ENCODE measurements at regions of chr2 and their contacts with region 1.

Region 1: GRCh38 chr2:74482801-74483674 is at the starts of genes CCDC142 and TTC31:
- DNase-seq: peak; percentile 94 to 98 (median 96)
- H3K4me3 ChIP-seq: peak within 1 kb of the TSS; percentile 57 to 100
- H3K4me3 Mint-ChIP-seq: peak within 1 kb of the TSS; percentile 99 to 100 (median 100)
- H3K27ac ChIP-seq: peak within 1 kb of the TSS; percentile 91
- H3K27ac Mint-ChIP-seq: peak within 1 kb of the TSS; percentile 91 to 100 (median 100)
- H3K4me1 ChIP-seq: peaks cover 28% of the 10 kb centered on the region
- H3K4me1 Mint-ChIP-seq: peaks cover 17 to 43% (median 25%) of the 10 kb centered on the region in 4 donors
- H3K27me3 ChIP-seq: no peaks in the 10 kb centered on the region
- H3K27me3 Mint-ChIP-seq: no peaks in the 10 kb centered on the region
- total RNA-seq, gene CCDC142: 63.9 to 67.6 TPM
- total RNA-seq, gene TTC31: 43.7 to 46.9 TPM

Region 2: DNA sequence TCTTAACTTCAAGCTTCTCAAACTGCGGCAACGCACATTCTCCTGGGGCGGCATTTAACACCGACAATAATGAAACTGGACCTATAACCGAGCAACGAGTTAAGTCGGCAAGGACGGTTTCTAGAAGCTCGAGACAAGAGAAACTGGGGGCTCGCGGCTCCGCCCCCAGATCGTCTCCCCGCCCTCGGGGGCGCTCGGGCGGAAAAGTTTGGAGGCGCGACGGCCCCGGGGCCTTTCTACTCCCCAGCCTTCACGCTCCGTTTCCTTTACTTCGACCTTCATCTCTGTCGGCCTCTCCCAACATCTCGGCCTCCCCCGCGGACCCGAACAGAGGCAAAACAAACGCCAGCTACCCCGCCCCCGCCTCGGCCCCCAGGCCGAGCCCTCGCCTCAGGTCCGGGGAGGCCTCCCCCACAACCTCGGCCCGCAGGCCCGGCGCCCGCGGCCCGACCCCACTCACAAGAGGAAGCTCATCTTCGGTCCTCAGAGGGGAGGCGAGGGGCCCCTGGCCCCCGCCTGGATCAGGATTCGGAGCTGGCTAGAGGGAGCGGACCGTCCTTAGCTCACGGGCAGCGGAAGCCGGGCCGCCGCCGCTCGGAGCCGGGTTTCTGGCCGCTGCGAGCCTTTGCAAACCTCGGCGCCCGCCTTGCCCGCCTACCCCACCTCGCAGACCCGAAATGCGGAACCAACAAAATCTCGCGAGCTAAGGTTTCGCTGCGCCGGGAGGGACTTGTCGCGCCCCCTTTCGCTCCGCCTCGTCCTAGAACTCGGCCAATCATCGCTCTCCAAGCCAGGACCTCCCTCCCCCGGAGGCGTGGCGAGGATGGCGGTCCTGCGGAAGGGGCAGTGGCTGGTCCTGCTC is 304.6 kb before region 1 on chr2 and contains the start of gene MOB1A:
- CTCF ChIA-PET with region 1: no interaction called
- POLR2A ChIA-PET with region 1: interaction called, 5 read pairs
- intact Hi-C with region 1: loop called (anchors 1 kb)
- DNase-seq: peak; percentile 97 to 99 (median 98)
- H3K4me3 ChIP-seq: peak within 1 kb of the TSS; percentile 69 to 74
- H3K4me3 Mint-ChIP-seq: peak within 1 kb of the TSS; percentile 90 to 94 (median 94)
- H3K27ac ChIP-seq: peak within 1 kb of the TSS; percentile 99
- H3K27ac Mint-ChIP-seq: peak within 1 kb of the TSS; percentile 89 to 96 (median 95)
- H3K4me1 ChIP-seq: peaks cover 47% of the 10 kb centered on the region
- H3K4me1 Mint-ChIP-seq: peaks cover 22 to 48% (median 35%) of the 10 kb centered on the region in 4 donors
- H3K27me3 ChIP-seq: no peaks in the 10 kb centered on the region
- H3K27me3 Mint-ChIP-seq: no peaks in the 10 kb centered on the region
- total RNA-seq, gene MOB1A: 135 TPM

Region 3: GRCh38 chr2:74458132-74458925 is 24.7 kb before region 1 on chr2 and contains the start of gene WBP1:
- CTCF ChIA-PET with region 1: interaction called, 66 read pairs
- POLR2A ChIA-PET with region 1: interaction called, 516 read pairs
- intact Hi-C with region 1: loop called (anchors 1 kb)
- DNase-seq: peak; percentile 99 to 100 (median 100)
- H3K4me3 ChIP-seq: peak within 1 kb of the TSS; percentile 70 to 93
- H3K4me3 Mint-ChIP-seq: peak within 1 kb of the TSS; percentile 95 to 99 (median 98)
- H3K27ac ChIP-seq: peak within 1 kb of the TSS; percentile 100
- H3K27ac Mint-ChIP-seq: peak within 1 kb of the TSS; percentile 92 to 100 (median 99)
- H3K4me1 ChIP-seq: peaks cover 45% of the 10 kb centered on the region
- H3K4me1 Mint-ChIP-seq: peaks cover 40 to 68% (median 55%) of the 10 kb centered on the region in 4 donors
- H3K27me3 ChIP-seq: no peaks in the 10 kb centered on the region
- H3K27me3 Mint-ChIP-seq: no peaks in the 10 kb centered on the region
- total RNA-seq, gene WBP1: 108 to 109 TPM

Region 4: GRCh38 chr2:74498500-74499266 is 15.6 kb after region 1 on chr2:
- CTCF ChIA-PET with region 1: interaction called, 6 read pairs
- POLR2A ChIA-PET with region 1: interaction called, 60 read pairs
- intact Hi-C with region 1: no loop called
- DNase-seq: peak in 3 of 5 donors; percentile 14 to 29 (median 19)
- H3K4me3 ChIP-seq: peak overlapping the region; percentile 52 to 64
- H3K4me3 Mint-ChIP-seq: peak overlapping the region; percentile 78 to 96 (median 89)
- H3K27ac ChIP-seq: no peak overlapping the region
- H3K27ac Mint-ChIP-seq: peak overlapping the region in 4 of 7 donors; percentile 32 to 63 (median 43)
- H3K4me1 ChIP-seq: peaks cover 36% of the 10 kb centered on the region
- H3K4me1 Mint-ChIP-seq: peaks cover 10 to 56% (median 34%) of the 10 kb centered on the region in 4 donors
- H3K27me3 ChIP-seq: peaks cover 31% of the 10 kb centered on the region
- H3K27me3 Mint-ChIP-seq: peaks cover 15 to 45% of the 10 kb centered on the region in 2 donors

Region 5: GRCh38 chr2:74544634-74545033 is 61.6 kb after region 1 on chr2:
- CTCF ChIA-PET with region 1: interaction called, 11 read pairs
- POLR2A ChIA-PET with region 1: interaction called, 3 read pairs
- intact Hi-C with region 1: loop called (anchors 1 kb)
- DNase-seq: no peak
- H3K4me3 ChIP-seq: no peak overlapping the region
- H3K4me3 Mint-ChIP-seq: no peak overlapping the region
- H3K27ac ChIP-seq: no peak overlapping the region
- H3K27ac Mint-ChIP-seq: no peak overlapping the region
- H3K4me1 ChIP-seq: peaks cover 12% of the 10 kb centered on the region
- H3K4me1 Mint-ChIP-seq: peaks cover 3 to 12% (median 6%) of the 10 kb centered on the region in 4 donors
- H3K27me3 ChIP-seq: peaks cover 20% of the 10 kb centered on the region
- H3K27me3 Mint-ChIP-seq: peaks cover 26 to 36% of the 10 kb centered on the region in 2 donors

Region 6: GRCh38 chr2:74653985-74654882 is 171.2 kb after region 1 on chr2 and contains the start of gene SEMA4F:
- CTCF ChIA-PET with region 1: no interaction called
- POLR2A ChIA-PET with region 1: interaction called, 3 read pairs
- intact Hi-C with region 1: loop called (anchors 10 kb)
- DNase-seq: peak; percentile 91 to 96 (median 94)
- H3K4me3 ChIP-seq: peak within 1 kb of the TSS; percentile 31 to 89
- H3K4me3 Mint-ChIP-seq: peak within 1 kb of the TSS; percentile 88 to 96 (median 92)
- H3K27ac ChIP-seq: peak within 1 kb of the TSS; percentile 58
- H3K27ac Mint-ChIP-seq: peak within 1 kb of the TSS; percentile 62 to 94 (median 90)
- H3K4me1 ChIP-seq: peaks cover 16% of the 10 kb centered on the region
- H3K4me1 Mint-ChIP-seq: peaks cover 13 to 29% (median 22%) of the 10 kb centered on the region in 4 donors
- H3K27me3 ChIP-seq: no peaks in the 10 kb centered on the region
- H3K27me3 Mint-ChIP-seq: peaks cover 2 to 4% of the 10 kb centered on the region in 2 donors
- total RNA-seq, gene SEMA4F: 19.5 to 21.6 TPM